ENCODE measurements at regions of chr10 and their contacts with region 1.

Region 1: GRCh38 chr10:79929409-79929904 is 19.4 kb downstream of the SFTPD start:
- DNase-seq: peak; percentile 65
- H3K4me3 ChIP-seq: no peak overlapping the region
- H3K27ac ChIP-seq: no peak overlapping the region
- H3K4me1 ChIP-seq: peaks cover 25% of the 10 kb centered on the region
- H3K27me3 ChIP-seq: peaks cover 8 to 11% of the 10 kb centered on the region in 2 experiments
- CTCF ChIP-seq: peak; percentile 82 to 90
- POLR2A ChIP-seq: no peak

Region 2: GRCh38 chr10:79116801-79117723 is 812.4 kb before region 1 on chr10:
- CTCF ChIA-PET with region 1: no interaction called
- POLR2A ChIA-PET with region 1: no interaction called
- dilution Hi-C with region 1: no loop called
- intact Hi-C with region 1: no loop called
- DNase-seq: no peak
- H3K4me3 ChIP-seq: no peak overlapping the region
- H3K27ac ChIP-seq: no peak overlapping the region
- H3K4me1 ChIP-seq: peaks cover 11% of the 10 kb centered on the region
- H3K27me3 ChIP-seq: no peaks in the 10 kb centered on the region
- CTCF ChIP-seq: no peak
- POLR2A ChIP-seq: no peak

Region 3: GRCh38 chr10:79562135-79562756 is 367.2 kb before region 1 on chr10:
- CTCF ChIA-PET with region 1: interaction called, 4 read pairs
- POLR2A ChIA-PET with region 1: no interaction called
- dilution Hi-C with region 1: no loop called
- intact Hi-C with region 1: loop called (anchors 1 kb)
- DNase-seq: peak; percentile 56
- H3K4me3 ChIP-seq: no peak overlapping the region
- H3K27ac ChIP-seq: no peak overlapping the region
- H3K4me1 ChIP-seq: no peaks in the 10 kb centered on the region
- H3K27me3 ChIP-seq: peaks cover 0 to 9% of the 10 kb centered on the region in 2 experiments
- CTCF ChIP-seq: peak; percentile 81 to 93
- POLR2A ChIP-seq: no peak

Region 4: GRCh38 chr10:79904671-79905321 is 24.7 kb before region 1 on chr10:
- CTCF ChIA-PET with region 1: interaction called, 5 read pairs
- POLR2A ChIA-PET with region 1: no interaction called
- dilution Hi-C with region 1: no loop called
- intact Hi-C with region 1: loop called (anchors 2 kb)
- DNase-seq: peak; percentile 82
- H3K4me3 ChIP-seq: peak overlapping the region; percentile 70 to 88 (median 86)
- H3K27ac ChIP-seq: peak overlapping the region; percentile 55
- H3K4me1 ChIP-seq: peaks cover 5% of the 10 kb centered on the region
- H3K27me3 ChIP-seq: no peaks in the 10 kb centered on the region
- CTCF ChIP-seq: no peak
- POLR2A ChIP-seq: peak; percentile 32

Region 5: GRCh38 chr10:79948976-79949722 is 19.7 kb after region 1 on chr10 and contains the start of gene SFTPD:
- CTCF ChIA-PET with region 1: no interaction called
- POLR2A ChIA-PET with region 1: no interaction called
- dilution Hi-C with region 1: no loop called
- intact Hi-C with region 1: no loop called
- DNase-seq: no peak
- H3K4me3 ChIP-seq: no peak within 1 kb of the TSS
- H3K27ac ChIP-seq: no peak within 1 kb of the TSS
- H3K4me1 ChIP-seq: no peaks in the 10 kb centered on the region
- H3K27me3 ChIP-seq: peaks cover 2 to 14% of the 10 kb centered on the region in 2 experiments
- CTCF ChIP-seq: no peak
- POLR2A ChIP-seq: no peak
- total RNA-seq, gene SFTPD: not detected in 2 replicates

Region 6: DNA sequence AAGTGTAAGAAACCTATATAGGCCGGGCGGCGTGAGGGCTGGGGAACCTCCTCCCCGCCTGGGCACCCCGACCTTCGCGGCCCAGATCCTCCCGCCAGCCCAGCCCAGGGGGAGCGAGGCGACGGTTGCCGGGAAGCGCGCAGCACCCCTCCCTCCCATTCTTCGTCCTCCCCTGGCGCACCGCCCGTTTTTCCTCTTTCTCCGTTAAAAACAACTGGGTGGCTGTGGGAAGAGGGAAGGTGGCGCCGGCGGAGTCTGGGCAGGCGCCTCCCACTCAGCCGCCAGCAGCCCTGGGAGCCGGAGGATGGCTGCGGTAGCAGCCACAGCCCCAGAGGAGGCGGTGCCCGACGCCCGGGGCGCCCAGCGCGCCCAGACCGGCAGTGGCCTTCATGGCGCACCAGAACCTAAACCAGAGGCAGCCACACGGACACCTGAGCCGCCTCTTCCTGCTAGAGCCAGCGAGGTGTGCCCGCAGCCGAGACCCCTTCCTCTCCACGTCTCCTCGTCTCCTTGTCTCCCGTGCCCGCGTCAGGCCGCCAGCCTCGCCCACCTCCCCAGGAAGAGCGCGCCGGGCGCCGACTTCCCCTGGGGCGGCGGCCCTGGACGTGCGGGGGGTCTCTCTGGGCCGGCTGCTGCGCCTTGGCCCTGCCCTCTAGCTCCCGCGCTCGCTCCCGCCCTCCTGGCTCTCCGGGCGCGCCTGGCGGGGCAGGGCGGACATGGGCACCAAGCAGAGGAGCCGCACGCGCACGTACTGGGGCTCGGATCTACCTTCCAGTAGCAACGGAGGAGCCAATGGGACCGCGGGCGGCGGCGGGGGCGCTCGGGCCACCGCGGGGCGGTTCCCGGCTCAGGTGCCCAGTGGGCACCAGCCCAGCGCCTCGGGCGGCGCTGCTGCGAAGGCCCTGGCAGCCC is 52.2 kb after region 1 on chr10:
- CTCF ChIA-PET with region 1: no interaction called
- POLR2A ChIA-PET with region 1: no interaction called
- dilution Hi-C with region 1: no loop called
- intact Hi-C with region 1: loop called (anchors 5 kb)
- DNase-seq: peak; percentile 37
- H3K4me3 ChIP-seq: peak overlapping the region; percentile 24 to 51 (median 25)
- H3K27ac ChIP-seq: no peak overlapping the region
- H3K4me1 ChIP-seq: no peaks in the 10 kb centered on the region
- H3K27me3 ChIP-seq: peaks cover 35 to 46% of the 10 kb centered on the region in 2 experiments
- CTCF ChIP-seq: peak in 1 of 2 donors; percentile 15
- POLR2A ChIP-seq: no peak

Region 7: GRCh38 chr10:79995979-79996634 is 66.7 kb after region 1 on chr10:
- CTCF ChIA-PET with region 1: no interaction called
- POLR2A ChIA-PET with region 1: no interaction called
- dilution Hi-C with region 1: no loop called
- intact Hi-C with region 1: no loop called
- DNase-seq: no peak
- H3K4me3 ChIP-seq: no peak overlapping the region
- H3K27ac ChIP-seq: no peak overlapping the region
- H3K4me1 ChIP-seq: no peaks in the 10 kb centered on the region
- H3K27me3 ChIP-seq: peaks cover 0 to 7% of the 10 kb centered on the region in 2 experiments
- CTCF ChIP-seq: no peak
- POLR2A ChIP-seq: no peak

Region 8: DNA sequence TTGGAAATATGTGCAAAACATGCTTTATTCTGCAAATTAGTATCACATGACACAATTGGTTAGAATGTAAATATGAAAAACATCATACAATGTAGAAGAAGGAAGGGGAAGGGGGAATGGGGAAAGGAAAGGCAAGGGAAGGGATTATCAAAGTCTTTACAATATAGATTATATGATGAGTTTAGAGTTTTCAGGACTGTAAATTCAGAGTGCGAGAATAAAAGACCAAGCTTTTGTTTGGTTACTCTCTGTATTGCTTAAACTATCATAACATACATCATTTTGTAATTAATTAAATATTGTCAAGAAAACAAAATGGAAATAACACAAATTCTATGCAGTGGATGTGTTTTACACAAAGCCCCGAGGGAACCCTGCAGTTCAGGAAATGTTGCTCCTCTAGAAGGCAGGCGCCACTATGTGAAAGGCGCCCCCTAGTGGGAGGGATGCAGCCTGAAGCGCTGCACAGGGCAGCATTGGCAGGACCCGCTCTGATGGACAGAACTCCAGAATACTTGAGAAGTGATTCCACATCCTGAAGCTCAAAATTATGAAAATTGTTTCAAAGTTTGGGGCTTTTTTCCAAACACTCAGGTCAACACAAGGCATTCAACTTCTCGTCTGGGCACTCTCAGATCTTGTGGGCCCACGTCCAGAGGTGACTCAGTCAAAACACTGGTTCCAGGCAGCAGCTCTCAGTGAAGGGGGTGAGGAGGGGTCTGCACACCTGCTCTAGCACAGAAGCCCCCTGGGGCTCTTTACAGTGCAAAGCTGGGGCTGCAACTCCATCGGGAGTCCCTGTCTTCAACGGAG is 117.4 kb after region 1 on chr10:
- CTCF ChIA-PET with region 1: no interaction called
- POLR2A ChIA-PET with region 1: no interaction called
- dilution Hi-C with region 1: no loop called
- intact Hi-C with region 1: loop called (anchors 5 kb)
- DNase-seq: peak; percentile 70
- H3K4me3 ChIP-seq: no peak overlapping the region
- H3K27ac ChIP-seq: no peak overlapping the region
- H3K4me1 ChIP-seq: no peaks in the 10 kb centered on the region
- H3K27me3 ChIP-seq: peaks cover 7 to 12% of the 10 kb centered on the region in 2 experiments
- CTCF ChIP-seq: peak; percentile 89 to 92
- POLR2A ChIP-seq: no peak

Region 9: DNA sequence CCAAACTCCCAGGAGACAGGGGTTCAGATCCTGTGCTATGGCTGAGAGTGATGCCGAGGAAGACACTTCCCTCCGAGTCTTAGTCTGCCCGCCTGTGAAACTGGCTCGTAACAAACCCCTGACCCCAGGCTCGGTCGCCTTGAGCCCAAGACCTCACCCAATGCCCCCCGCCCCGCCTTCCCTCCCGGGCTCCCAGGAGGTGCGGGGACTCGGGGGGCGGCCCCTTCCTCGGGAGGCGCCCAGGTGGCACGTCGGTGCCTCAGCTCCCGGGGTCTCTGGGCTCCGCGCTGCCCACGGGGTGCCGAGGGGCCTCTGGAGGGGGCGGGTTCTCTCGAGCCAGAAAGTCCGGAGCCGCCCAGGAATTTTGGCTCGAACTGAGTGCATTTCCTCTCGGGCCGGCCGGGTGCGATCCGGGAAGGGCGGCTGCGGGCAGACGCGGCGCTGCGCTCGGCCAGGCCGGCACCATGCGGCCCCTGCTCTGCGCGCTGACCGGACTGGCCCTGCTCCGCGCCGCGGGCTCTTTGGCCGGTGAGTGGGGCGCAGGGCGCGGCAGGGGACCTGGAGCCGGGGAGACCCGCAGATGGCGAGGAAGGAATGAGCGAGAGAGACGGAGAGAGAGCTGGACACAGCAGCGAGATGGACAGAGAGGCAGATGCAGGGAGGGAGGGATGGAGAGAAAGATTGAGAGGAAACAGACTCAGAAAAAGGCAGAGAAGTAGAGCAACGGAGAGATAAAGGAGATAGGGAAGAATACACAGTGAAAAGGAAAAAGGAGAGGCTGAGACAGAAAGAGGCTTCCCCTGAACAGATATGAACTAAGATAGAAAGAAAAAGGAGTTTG is 203.1 kb after region 1 on chr10 and contains the start of gene PLAC9:
- CTCF ChIA-PET with region 1: no interaction called
- POLR2A ChIA-PET with region 1: no interaction called
- dilution Hi-C with region 1: no loop called
- intact Hi-C with region 1: no loop called
- DNase-seq: no peak
- H3K4me3 ChIP-seq: peak within 1 kb of the TSS; percentile 21 to 58 (median 56)
- H3K27ac ChIP-seq: no peak within 1 kb of the TSS
- H3K4me1 ChIP-seq: peaks cover 10% of the 10 kb centered on the region
- H3K27me3 ChIP-seq: peaks cover 0 to 2% of the 10 kb centered on the region in 2 experiments
- CTCF ChIP-seq: no peak
- POLR2A ChIP-seq: no peak
- total RNA-seq, gene PLAC9: 1.7 and 2.1 TPM in 2 replicates

Measured in endothelial cell of umbilical vein (primary cell).